Common myeloid progenitor, CD34-positive (primary cell): ENCODE measurements at regions of chr3 and their contacts with region 1.

Region 1: GRCh38 chr3:4551051-4551711 is 58.0 kb downstream of the ITPR1 start:
- DNase-seq: no peak
- H3K4me3 ChIP-seq: no peak overlapping the region
- H3K27ac ChIP-seq: no peak overlapping the region
- H3K4me1 ChIP-seq: peaks cover 0 to 36% (median 15%) of the 10 kb centered on the region in 4 experiments
- H3K27me3 ChIP-seq: no peaks in the 10 kb centered on the region

Region 2: GRCh38 chr3:4466741-4467521 is 84.2 kb before region 1 on chr3 and contains the start of gene SUMF1:
- CTCF ChIA-PET with region 1: no interaction called
- POLR2A ChIA-PET with region 1: no interaction called
- DNase-seq: peak; percentile 55 to 76 (median 68)
- H3K4me3 ChIP-seq: peak within 1 kb of the TSS; percentile 84 to 97 (median 92)
- H3K27ac ChIP-seq: peak within 1 kb of the TSS; percentile 74 to 92
- H3K4me1 ChIP-seq: peaks cover 6 to 20% (median 16%) of the 10 kb centered on the region in 4 experiments
- H3K27me3 ChIP-seq: no peaks in the 10 kb centered on the region

Region 3: DNA sequence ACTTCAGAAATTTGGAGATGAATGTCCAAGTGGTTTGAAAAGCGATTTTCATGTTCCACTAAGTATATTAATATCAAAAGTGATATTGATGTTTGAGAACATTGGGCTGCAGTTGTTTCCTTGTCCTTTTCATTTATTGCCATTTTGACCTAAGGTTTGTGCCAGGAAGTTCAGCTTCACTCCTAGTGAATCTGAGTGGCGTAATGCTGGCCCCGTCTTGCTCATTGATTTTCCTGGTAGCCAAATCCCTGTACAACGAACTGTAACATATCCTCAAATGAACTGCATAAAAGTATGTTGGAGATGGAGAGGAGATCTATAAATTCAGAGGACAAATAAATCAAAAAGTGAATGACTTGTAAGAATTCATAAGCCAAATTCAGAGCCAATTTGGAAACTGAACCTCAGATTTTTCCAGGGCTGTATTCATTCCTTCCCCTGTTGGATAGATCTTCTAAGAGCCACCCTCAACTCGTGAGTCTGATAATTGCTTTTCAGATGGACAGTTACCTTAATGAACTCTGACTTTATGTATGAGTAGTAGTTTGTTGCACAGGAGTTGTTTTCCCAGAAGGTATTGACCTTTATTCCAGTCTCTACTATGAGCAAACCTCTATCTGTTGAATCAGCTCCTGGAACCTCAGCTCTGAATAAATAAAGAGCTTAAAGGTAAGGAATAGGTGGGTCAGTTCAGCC is 14.8 kb after region 1 on chr3:
- CTCF ChIA-PET with region 1: interaction called, 15 read pairs
- POLR2A ChIA-PET with region 1: no interaction called
- DNase-seq: no peak
- H3K4me3 ChIP-seq: no peak overlapping the region
- H3K27ac ChIP-seq: no peak overlapping the region
- H3K4me1 ChIP-seq: peaks cover 0 to 11% (median 3%) of the 10 kb centered on the region in 4 experiments
- H3K27me3 ChIP-seq: no peaks in the 10 kb centered on the region